ENCODE measurements at regions of chr9 and their contacts with region 1.

Region 1: GRCh38 chr9:137223078-137223970 is 1.3 kb upstream of the RNF208 start:
- DNase-seq: peak; percentile 99
- H3K27ac ChIP-seq: peak overlapping the region; percentile 95
- CTCF ChIP-seq: no peak

Region 2: GRCh38 chr9:137162505-137163100 is 60.7 kb before region 1 on chr9:
- CTCF ChIA-PET with region 1: interaction called, 13 read pairs
- POLR2A ChIA-PET with region 1: interaction called, 4 read pairs
- DNase-seq: no peak
- H3K27ac ChIP-seq: no peak overlapping the region
- CTCF ChIP-seq: peak; percentile 51; the same call in 1 of the 2 replicates

Region 3: DNA sequence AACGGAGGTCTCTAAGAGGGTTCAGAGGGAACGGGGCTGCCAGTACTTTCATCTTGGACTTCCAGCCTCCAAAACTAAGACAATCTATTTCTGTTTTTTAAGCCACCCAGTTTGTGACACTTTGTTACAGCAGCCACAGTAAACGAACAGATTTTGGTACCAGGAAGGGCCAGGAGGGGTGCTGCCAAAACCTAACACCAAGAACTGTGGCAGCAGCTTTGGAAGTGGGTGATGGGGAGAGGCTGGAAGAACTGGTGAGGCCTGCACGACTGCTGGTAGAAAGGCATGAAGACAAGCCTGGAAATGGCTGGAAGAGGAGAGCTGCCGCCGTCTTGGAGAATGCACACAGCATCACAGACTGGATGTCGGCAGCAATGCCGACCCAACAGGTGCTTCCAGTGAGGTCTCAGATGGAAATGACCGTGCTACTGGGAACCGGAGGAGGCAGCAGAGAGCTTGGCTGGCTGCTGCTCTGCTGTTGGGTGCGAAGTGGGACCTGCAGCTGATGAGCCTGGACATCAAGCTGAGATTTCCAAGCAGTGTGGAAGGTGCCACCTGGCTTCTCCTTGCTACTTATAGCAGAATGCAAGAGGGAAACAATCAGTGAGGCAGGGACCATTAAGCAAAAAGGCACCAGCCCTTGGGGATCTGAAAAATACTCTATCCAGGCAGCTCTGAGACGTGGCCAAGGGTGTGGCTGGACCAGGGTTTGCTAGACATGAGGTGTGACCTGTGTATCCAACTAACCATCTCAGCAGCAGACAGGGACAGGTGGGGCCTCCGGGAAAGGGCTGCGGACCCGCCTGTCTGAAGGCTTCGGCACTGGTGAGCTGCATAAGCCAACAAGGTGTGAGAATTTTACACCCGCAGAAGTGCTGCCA is 46.8 kb before region 1 on chr9:
- CTCF ChIA-PET with region 1: interaction called, 10 read pairs
- POLR2A ChIA-PET with region 1: no interaction called
- DNase-seq: peak; percentile 65
- H3K27ac ChIP-seq: peak overlapping the region; percentile 26
- CTCF ChIP-seq: peak; percentile 78; the same call in 1 of the 2 replicates

Region 4: GRCh38 chr9:137188490-137189296 is 34.6 kb before region 1 on chr9 and contains the starts of genes ANAPC2 and SSNA1:
- CTCF ChIA-PET with region 1: interaction called, 37 read pairs
- POLR2A ChIA-PET with region 1: interaction called, 16 read pairs
- DNase-seq: peak; percentile 98
- H3K27ac ChIP-seq: peak within 1 kb of the TSS; percentile 99
- CTCF ChIP-seq: peak; percentile 57

Region 5: GRCh38 chr9:137200311-137201204 is 22.8 kb before region 1 on chr9 and contains the start of gene TPRN:
- CTCF ChIA-PET with region 1: interaction called, 10 read pairs
- POLR2A ChIA-PET with region 1: interaction called, 4 read pairs
- DNase-seq: peak; percentile 100
- H3K27ac ChIP-seq: peak within 1 kb of the TSS; percentile 99
- CTCF ChIP-seq: no peak

Region 6: GRCh38 chr9:137253717-137254623 is 30.6 kb after region 1 on chr9:
- CTCF ChIA-PET with region 1: no interaction called
- POLR2A ChIA-PET with region 1: no interaction called
- DNase-seq: no peak
- H3K27ac ChIP-seq: peak overlapping the region; percentile 84
- CTCF ChIP-seq: no peak

Region 7: GRCh38 chr9:137286975-137287383 is 63.7 kb after region 1 on chr9:
- CTCF ChIA-PET with region 1: no interaction called
- POLR2A ChIA-PET with region 1: no interaction called
- DNase-seq: no peak
- H3K27ac ChIP-seq: no peak overlapping the region
- CTCF ChIP-seq: peak; percentile 83